AG04450 (cell line): ENCODE measurements at regions of chr7 and their contacts with region 1.

Region 1: GRCh38 chr7:143362131-143363015 is at the start of gene FAM131B:
- DNase-seq: no peak
- H3K4me3 ChIP-seq: peak within 1 kb of the TSS; percentile 69
- H3K27ac ChIP-seq: no peak within 1 kb of the TSS
- H3K27me3 ChIP-seq: peaks cover 38% of the 10 kb centered on the region
- CTCF ChIP-seq: no peak
- polyA plus RNA-seq, gene FAM131B: 3.1 and 4.2 TPM in 2 replicates

Region 2: DNA sequence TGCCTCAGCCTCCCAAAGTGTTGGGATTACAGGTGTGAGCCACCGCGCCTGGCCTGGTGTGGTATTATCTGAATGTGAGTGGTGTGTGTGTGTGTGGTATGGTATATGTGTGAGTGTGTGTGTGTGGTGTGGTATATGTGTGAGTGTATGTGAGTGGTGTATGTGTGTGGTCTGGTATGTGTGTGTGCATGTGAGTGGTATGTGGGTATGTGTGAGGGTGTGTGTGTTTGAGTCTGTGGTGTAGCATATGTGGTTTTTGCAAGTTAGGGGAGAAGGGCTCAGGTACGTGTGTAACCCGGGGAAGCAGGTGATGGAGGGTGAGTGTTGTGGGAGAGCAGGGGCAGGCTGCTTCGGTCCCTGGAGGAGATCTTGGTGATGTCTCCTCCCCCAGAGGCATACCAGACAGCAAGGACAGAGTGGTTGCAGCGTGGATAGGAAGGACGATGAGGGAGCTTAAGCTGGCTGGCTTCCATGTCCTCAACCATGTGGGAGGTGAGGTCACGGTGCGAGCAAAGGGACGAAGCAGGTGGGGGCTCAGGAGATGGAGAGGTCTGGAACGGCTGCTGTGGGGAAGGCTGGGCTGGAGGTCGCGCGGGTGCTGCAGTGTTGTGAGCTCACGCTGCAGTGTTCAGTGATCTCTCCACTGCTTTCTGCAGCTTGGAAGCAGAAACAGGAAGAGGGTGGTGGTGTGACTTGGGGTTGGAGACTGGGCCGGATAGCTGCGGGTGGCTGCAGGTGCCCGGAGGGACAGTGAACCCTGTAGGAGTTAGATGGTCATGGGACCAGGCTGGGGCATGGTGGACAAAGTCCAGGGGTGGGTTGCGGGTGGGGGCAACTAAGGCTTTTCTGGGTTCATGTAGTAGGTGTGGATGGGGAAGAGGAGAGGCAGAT is 23.8 kb after region 1 on chr7:
- CTCF ChIA-PET with region 1: interaction called, 3 read pairs
- POLR2A ChIA-PET with region 1: interaction called, 11 read pairs
- DNase-seq: no peak
- H3K4me3 ChIP-seq: peak overlapping the region; percentile 45
- H3K27ac ChIP-seq: no peak overlapping the region
- H3K27me3 ChIP-seq: no peaks in the 10 kb centered on the region
- CTCF ChIP-seq: no peak